ENCODE measurements at regions of chr1 and their contacts with region 1.

Region 1: GRCh38 chr1:13956393-13956792 is 256.4 kb downstream of the PRDM2 start:
- DNase-seq: no peak
- H3K4me3 ChIP-seq: no peak overlapping the region
- CTCF ChIP-seq: no peak
- POLR2A ChIP-seq: no peak

Region 2: DNA sequence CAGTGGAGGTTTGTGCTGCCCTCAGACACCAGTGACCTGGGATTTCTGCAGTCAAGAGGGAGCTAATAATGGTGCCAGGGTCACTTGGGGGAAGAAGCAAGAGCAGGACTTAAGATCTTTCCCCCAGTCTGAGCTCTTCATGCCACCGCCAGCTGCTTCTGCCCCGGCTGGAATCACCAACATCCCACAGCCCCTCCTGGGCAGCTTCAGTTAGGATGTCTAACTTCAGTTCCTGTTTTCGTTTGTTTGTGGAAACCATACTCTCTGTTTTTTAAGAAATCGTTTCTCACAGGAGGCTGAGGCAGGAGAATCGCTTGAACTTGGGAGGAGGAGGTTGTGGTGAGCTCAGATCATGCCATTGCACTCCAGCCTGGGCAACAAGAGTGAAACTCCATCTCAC is 282.0 kb before region 1 on chr1:
- intact Hi-C with region 1: loop called (anchors 5 kb)
- DNase-seq: no peak
- H3K4me3 ChIP-seq: no peak overlapping the region
- CTCF ChIP-seq: no peak
- POLR2A ChIP-seq: no peak

Region 3: GRCh38 chr1:13813398-13814012 is 142.9 kb before region 1 on chr1:
- intact Hi-C with region 1: no loop called
- DNase-seq: no peak
- H3K4me3 ChIP-seq: no peak overlapping the region
- CTCF ChIP-seq: no peak
- POLR2A ChIP-seq: no peak